Gastrocnemius medialis (tissue), 4 donors: ENCODE measurements at regions of chr1 and their contacts with region 1.

Region 1: GRCh38 chr1:42681741-42682483 is at the start of gene YBX1:
- DNase-seq: peak; percentile 98 to 99
- ATAC-seq: peak; percentile 94 to 96
- H3K4me3 ChIP-seq: peak within 1 kb of the TSS; percentile 84 to 92 (median 86)
- H3K27ac ChIP-seq: peak within 1 kb of the TSS; percentile 97 to 98 (median 98)
- H3K4me1 ChIP-seq: peaks cover 43 to 44% of the 10 kb centered on the region in 2 donors
- H3K27me3 ChIP-seq: no peaks in the 10 kb centered on the region
- CTCF ChIP-seq: no peak
- POLR2A ChIP-seq: peak; percentile 89 to 95
- total RNA-seq, gene YBX1: 861 to 1,251 (median 1,022) TPM

Region 2: DNA sequence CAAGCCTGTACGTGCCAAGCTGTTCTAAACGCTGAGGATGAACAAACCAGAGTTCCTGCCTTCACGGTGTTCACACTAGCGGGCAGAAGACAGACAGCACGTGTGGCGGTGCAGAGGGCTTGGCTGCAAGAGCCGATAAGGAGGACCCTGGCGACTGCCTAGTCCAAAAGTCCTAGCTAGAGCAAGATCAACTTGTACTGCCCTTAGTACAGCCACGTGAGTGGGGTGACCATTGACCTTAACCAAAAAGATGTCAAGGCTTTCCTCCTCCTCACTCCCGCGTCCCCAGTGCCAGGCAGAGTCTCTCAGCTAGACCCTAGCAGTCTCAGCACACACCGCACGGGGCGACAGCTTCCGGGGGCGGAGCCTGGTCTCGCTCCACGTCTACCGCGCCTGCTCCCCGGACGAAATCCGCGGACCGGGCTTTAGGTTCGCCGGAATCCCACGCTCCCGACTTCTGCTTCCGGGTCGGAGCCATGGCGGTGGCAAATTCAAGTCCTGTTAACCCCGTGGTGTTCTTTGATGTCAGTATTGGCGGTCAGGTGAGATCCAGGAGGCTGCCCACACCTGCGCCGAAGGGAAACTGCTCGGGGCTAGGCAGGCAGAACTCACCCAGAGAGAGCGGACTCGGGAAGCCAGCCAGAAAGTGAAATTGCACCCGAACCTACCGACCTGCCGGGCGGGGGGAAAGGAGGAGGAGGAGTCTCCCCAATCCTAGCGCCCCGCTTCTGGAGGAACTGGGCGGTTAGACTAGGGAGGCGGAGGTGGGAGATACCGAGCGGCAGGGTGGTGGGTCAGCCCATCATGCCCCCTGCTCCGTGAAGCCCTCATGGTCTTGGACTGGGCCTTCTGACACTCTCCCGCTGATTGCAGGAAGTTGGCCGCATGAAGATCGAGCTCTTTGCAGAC is 23.7 kb before region 1 on chr1 and contains the start of gene PPIH:
- in situ Hi-C with region 1: no loop called
- intact Hi-C with region 1: loop called (anchors 1 kb)
- DNase-seq: peak; percentile 86 to 91
- ATAC-seq: peak; percentile 98 to 99
- H3K4me3 ChIP-seq: peak within 1 kb of the TSS; percentile 80 to 94 (median 89)
- H3K27ac ChIP-seq: peak within 1 kb of the TSS; percentile 82 to 92 (median 89)
- H3K4me1 ChIP-seq: peaks cover 14 to 15% of the 10 kb centered on the region in 2 donors
- H3K27me3 ChIP-seq: no peaks in the 10 kb centered on the region
- CTCF ChIP-seq: peak in 4 of 5 experiments; percentile 31 to 56 (median 47)
- POLR2A ChIP-seq: peak; percentile 50 to 58
- total RNA-seq, gene PPIH: 6.1 to 13.6 (median 7.1) TPM

Region 3: GRCh38 chr1:42816585-42817434 is 134.9 kb after region 1 on chr1 and contains the starts of genes ERMAP and SVBP:
- in situ Hi-C with region 1: no loop called
- intact Hi-C with region 1: loop called (anchors 1 kb)
- DNase-seq: peak; percentile 84 to 87
- ATAC-seq: peak; percentile 97
- H3K4me3 ChIP-seq: peak within 1 kb of the TSS; percentile 65 to 95 (median 76)
- H3K27ac ChIP-seq: peak within 1 kb of the TSS; percentile 88 to 100 (median 96)
- H3K4me1 ChIP-seq: peaks cover 2 to 20% of the 10 kb centered on the region in 2 donors
- H3K27me3 ChIP-seq: no peaks in the 10 kb centered on the region
- CTCF ChIP-seq: no peak
- POLR2A ChIP-seq: no peak
- total RNA-seq, gene ERMAP: 1.4 to 6.5 (median 3.9) TPM
- total RNA-seq, gene SVBP: 15.5 to 26.4 (median 24.9) TPM

Region 4: GRCh38 chr1:42846257-42847110 is 164.6 kb after region 1 on chr1 and contains the start of gene ZNF691:
- in situ Hi-C with region 1: no loop called
- intact Hi-C with region 1: loop called (anchors 10 kb)
- DNase-seq: peak; percentile 96 to 97
- ATAC-seq: peak; percentile 100
- H3K4me3 ChIP-seq: peak within 1 kb of the TSS; percentile 79 to 99 (median 98)
- H3K27ac ChIP-seq: peak within 1 kb of the TSS; percentile 92 to 96 (median 94)
- H3K4me1 ChIP-seq: peaks cover 18 to 23% of the 10 kb centered on the region in 2 donors
- H3K27me3 ChIP-seq: no peaks in the 10 kb centered on the region
- CTCF ChIP-seq: peak; percentile 11 to 63 (median 23)
- POLR2A ChIP-seq: peak; percentile 65 to 74
- total RNA-seq, gene ZNF691: 7.1 to 25.5 (median 9.8) TPM

Region 5: GRCh38 chr1:42957577-42958487 is 275.9 kb after region 1 on chr1:
- in situ Hi-C with region 1: no loop called
- intact Hi-C with region 1: no loop called
- DNase-seq: no peak
- ATAC-seq: peak; percentile 45 to 49
- H3K4me3 ChIP-seq: peak overlapping the region; percentile 56 to 78 (median 63)
- H3K27ac ChIP-seq: peak overlapping the region in 3 of 4 donors; percentile 31 to 55 (median 53)
- H3K4me1 ChIP-seq: peaks cover 5 to 9% of the 10 kb centered on the region in 2 donors
- H3K27me3 ChIP-seq: peaks cover 23 to 36% (median 34%) of the 10 kb centered on the region in 3 donors
- CTCF ChIP-seq: no peak
- POLR2A ChIP-seq: no peak

Region 6: DNA sequence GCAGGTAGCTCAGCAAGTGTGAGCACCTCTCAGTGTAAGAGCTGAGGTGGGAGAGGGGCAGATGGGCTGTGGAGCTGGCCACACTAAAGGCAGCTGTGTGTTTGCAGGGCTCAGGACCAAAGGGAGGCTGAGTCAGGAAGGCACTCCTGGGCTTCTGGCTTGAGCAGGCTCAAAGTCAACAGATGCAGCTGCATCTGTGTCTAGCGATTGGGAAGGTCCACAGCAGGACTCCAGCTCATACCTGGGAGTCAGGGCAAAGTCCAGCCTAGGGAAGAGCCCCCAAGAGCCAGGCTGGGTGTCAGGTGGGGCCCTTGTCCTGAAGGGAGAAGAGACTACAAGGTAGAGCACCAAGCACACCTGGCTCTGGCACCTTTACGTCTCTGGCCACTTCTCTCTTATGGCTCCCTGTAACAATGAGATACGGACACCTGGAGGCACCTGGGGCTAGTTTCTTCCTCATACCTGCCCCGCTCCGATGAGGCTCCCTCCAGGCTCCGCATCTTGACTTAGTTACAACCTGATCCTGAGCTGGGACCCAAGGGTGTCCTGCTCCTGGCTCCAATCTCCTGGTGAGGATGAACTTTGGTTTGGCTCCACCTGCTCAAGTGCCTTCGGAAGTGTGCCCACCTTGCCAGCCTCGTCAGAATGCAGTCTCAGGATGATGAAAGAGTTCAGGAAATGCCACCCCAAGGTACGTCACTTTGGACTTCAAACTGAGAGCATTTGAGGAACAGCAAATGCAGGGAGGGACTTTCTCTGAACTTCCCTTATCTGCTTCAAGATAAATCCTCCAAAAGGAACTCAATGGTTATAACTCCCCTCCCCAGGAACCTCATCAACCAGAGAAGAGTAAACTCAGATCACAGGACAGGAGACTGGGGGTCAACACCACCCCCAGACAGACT is 298.2 kb after region 1 on chr1:
- in situ Hi-C with region 1: no loop called
- intact Hi-C with region 1: no loop called
- DNase-seq: no peak
- ATAC-seq: no peak
- H3K4me3 ChIP-seq: no peak overlapping the region
- H3K27ac ChIP-seq: no peak overlapping the region
- H3K4me1 ChIP-seq: no peaks in the 10 kb centered on the region
- H3K27me3 ChIP-seq: peaks cover 0 to 26% (median 12%) of the 10 kb centered on the region in 3 donors
- CTCF ChIP-seq: no peak
- POLR2A ChIP-seq: no peak